HEK293 (cell line): ENCODE measurements at regions of chr7 and their contacts with region 1.

Region 1: GRCh38 chr7:129091484-129092002 is 36.6 kb upstream of the TNPO3 start:
- H3K4me3 ChIP-seq: no peak overlapping the region
- H3K27ac ChIP-seq: no peak overlapping the region
- H3K4me1 ChIP-seq: no peaks in the 10 kb centered on the region
- CTCF ChIP-seq: peak; percentile 94

Region 2: DNA sequence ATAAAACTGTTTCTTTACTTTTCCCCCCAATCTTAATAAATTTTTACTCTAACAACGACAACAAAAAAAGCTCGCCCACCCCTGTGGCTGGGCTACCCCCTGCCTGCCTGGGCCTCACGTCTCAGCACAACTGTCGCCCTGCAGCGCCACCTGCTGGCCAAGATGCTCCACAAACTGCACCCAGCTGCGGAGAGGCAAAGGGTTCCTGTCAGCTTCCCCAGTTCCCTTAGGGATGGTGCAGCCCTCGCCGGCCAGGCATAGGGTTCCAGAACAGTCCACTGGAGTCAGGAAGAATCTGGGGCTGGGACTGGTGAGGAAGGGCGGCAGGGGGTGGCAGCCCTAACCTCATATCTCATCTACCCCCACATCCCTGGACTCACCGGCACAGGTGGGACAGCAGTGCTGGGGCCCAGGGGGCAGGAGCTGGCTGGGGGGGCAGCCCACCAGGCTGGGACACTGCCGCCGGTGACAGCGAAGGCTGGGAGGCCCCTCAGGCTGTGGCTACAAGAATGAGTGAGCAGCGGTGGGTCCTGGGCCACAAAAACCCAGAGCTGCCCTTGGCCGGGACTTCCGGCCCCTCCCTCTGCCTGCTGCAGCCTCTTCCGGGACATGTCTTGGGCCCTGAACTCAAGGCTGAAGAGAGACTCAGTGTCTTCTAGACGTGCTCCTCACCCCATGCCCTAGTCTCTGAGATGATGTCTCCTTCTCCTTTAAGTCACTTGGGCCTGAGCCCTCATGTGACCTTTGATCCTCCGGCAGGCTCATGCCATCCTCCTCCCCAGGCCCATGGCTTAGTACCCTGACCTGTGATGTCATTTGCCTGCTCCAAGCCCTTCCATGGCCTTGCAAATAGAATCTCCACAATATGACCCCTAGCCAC is 207.7 kb before region 1 on chr7:
- CTCF ChIA-PET with region 1: interaction called, 18 read pairs
- POLR2A ChIA-PET with region 1: no interaction called
- H3K4me3 ChIP-seq: no peak overlapping the region
- H3K27ac ChIP-seq: no peak overlapping the region
- H3K4me1 ChIP-seq: no peaks in the 10 kb centered on the region
- CTCF ChIP-seq: peak; percentile 76

Region 3: DNA sequence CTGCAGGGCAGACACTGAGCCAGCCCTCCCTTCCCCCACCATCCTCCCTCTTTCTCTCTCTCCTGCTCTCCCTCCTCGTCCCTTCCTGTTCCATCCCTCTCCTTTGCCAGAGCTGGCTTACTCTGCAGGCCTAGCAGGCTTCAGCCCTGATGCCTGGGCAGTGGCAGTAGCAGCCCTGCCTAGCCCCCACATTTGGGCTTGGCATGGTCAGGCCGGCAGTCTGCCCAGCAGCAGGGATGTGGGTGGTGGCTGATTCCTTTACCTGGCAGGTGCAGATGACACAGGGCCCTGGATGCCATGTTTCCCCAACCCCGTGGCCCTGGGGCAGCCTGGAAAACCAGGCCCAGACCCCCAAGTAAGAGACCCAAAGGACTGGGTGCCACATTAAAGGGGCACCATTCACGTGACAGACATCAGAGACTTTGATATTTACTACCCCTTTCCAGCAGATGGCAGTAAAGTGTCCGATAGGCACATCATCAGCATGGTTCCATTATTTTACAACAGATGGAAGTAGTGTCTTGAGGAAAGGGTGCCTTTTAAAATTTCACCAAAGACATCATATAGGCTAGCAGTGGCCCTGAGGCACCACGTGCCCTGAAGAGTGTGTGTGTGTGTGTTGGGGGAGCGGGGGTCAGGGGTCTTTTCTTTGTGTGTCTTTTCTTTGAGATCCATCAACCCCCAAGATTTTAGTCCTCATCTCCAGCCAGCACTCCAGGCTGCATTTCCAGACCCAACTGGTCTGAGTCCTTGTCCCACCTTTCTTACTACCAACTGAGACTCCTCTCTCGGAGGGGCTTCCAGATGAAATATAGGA is 187.0 kb before region 1 on chr7:
- CTCF ChIA-PET with region 1: interaction called, 16 read pairs
- POLR2A ChIA-PET with region 1: no interaction called
- H3K4me3 ChIP-seq: no peak overlapping the region
- H3K27ac ChIP-seq: no peak overlapping the region
- H3K4me1 ChIP-seq: no peaks in the 10 kb centered on the region
- CTCF ChIP-seq: no peak; the same call in 1 of the 2 replicates

Region 4: DNA sequence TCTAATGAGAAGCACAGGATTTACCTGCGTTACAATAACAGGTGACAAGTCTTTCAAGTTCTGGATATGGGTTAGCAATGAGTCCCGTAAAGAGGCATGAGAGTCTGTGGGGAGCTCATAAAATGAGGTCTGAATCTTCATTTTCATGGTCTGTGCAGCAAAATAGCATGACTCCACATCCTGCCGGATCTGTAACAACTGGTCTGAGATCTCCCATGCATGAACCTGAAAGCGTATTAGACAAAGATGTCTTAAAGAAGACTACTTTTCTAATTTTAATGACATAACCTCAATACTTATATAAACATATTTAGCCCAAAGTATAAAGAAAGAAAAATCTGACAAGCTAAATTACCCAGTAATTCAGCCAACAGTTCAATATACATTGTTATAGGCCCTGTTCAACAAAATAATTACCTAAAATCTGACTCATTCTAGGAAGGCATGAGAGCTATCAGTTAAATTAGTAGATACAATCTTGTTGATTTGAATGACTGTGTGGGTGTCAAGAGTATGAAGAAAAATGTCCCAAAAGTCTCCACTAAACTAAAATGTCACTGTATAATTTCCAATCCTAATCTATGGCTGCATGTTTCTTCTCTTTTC is 73.5 kb before region 1 on chr7:
- CTCF ChIA-PET with region 1: interaction called, 10 read pairs
- POLR2A ChIA-PET with region 1: no interaction called
- H3K4me3 ChIP-seq: no peak overlapping the region
- H3K27ac ChIP-seq: no peak overlapping the region
- H3K4me1 ChIP-seq: no peaks in the 10 kb centered on the region
- CTCF ChIP-seq: no peak

Region 5: GRCh38 chr7:129078455-129078854 is 13.1 kb before region 1 on chr7:
- CTCF ChIA-PET with region 1: interaction called, 18 read pairs
- POLR2A ChIA-PET with region 1: no interaction called
- H3K4me3 ChIP-seq: no peak overlapping the region
- H3K27ac ChIP-seq: no peak overlapping the region
- H3K4me1 ChIP-seq: no peaks in the 10 kb centered on the region
- CTCF ChIP-seq: no peak

Region 6: GRCh38 chr7:129210256-129210988 is 118.9 kb after region 1 on chr7:
- CTCF ChIA-PET with region 1: interaction called, 14 read pairs
- POLR2A ChIA-PET with region 1: no interaction called
- H3K4me3 ChIP-seq: no peak overlapping the region
- H3K27ac ChIP-seq: no peak overlapping the region
- H3K4me1 ChIP-seq: no peaks in the 10 kb centered on the region
- CTCF ChIP-seq: peak; percentile 70